ENCODE measurements at regions of chr21 and their contacts with region 1.

Region 1: GRCh38 chr21:36141513-36141925 is 6.6 kb downstream of the CBR3 start:
- DNase-seq: peak; percentile 76
- H3K4me3 Mint-ChIP-seq: no peak overlapping the region
- H3K27ac Mint-ChIP-seq: no peak overlapping the region
- H3K4me1 Mint-ChIP-seq: peaks cover 15% of the 10 kb centered on the region
- H3K27me3 Mint-ChIP-seq: no peaks in the 10 kb centered on the region

Region 2: DNA sequence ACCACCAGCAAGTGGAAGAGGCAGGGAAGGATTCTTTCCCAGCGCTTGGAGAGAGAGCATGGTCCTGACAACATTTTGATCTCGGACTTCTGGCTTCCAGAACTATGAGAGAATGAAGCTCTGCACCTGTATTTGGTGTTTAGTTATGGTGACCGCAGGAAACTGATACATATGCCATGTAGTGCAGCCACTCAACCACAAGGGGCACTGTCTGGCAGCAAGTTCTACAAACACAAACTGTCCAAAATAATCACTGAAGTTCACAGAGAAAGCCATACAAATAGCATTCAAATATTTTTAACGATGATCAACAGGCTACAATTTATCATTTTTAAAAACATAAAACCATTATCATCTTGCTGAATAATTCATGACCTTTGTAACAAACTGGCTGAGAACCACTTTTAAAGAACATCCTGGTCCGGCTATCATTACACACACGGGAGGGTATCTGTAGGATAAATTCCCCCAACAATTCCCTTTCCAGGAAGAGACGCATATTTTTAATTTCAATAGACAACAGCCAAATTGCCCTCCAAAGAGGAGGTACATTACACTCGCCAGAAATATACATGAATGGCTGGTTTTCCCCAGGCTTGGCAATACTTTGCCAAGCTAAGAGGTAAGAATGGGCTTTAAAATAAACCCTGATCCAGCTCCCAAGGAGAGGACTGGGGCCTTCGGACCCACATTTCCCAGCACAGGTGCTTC is 15.9 kb before region 1 on chr21:
- intact Hi-C with region 1: loop called (anchors 1 kb)
- DNase-seq: peak; percentile 19
- H3K4me3 Mint-ChIP-seq: no peak overlapping the region
- H3K27ac Mint-ChIP-seq: no peak overlapping the region
- H3K4me1 Mint-ChIP-seq: peaks cover 20% of the 10 kb centered on the region
- H3K27me3 Mint-ChIP-seq: peaks cover 8% of the 10 kb centered on the region

Region 3: DNA sequence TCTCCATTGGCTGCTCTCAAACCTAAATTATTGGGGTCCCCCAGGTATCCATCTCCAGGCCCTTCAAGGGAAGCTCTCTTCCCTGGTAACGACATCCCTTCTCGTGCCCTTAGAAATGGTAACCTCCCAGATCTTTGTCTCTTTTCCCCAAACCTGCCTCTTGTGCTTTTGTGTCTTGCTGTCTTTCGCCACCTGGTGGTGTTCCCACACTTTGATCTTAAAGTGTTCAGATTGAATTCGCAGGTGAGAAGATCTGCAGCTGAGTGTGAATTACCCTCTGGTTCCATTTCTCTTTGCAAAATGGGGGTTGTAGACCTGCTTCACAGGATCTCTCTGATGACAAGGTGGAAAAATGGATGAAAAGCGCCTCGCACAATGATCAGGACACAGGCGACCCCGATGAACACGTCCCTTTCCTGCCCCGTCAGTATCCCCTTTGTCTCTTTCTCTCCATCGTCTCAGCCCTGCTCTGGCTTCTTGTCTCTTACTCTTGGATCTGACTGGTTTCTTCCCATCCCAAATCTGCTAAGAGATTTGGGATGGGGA is 68.2 kb after region 1 on chr21:
- intact Hi-C with region 1: loop called (anchors 1 kb)
- DNase-seq: peak; percentile 38
- H3K4me3 Mint-ChIP-seq: no peak overlapping the region
- H3K27ac Mint-ChIP-seq: no peak overlapping the region
- H3K4me1 Mint-ChIP-seq: peaks cover 19% of the 10 kb centered on the region
- H3K27me3 Mint-ChIP-seq: peaks cover 2% of the 10 kb centered on the region

Region 4: GRCh38 chr21:36330904-36331303 is 189.4 kb after region 1 on chr21:
- intact Hi-C with region 1: loop called (anchors 1 kb)
- DNase-seq: no peak
- H3K4me3 Mint-ChIP-seq: no peak overlapping the region
- H3K27ac Mint-ChIP-seq: no peak overlapping the region
- H3K4me1 Mint-ChIP-seq: peaks cover 13% of the 10 kb centered on the region
- H3K27me3 Mint-ChIP-seq: no peaks in the 10 kb centered on the region

Region 5: GRCh38 chr21:37675202-37675801 is 1533.8 kb after region 1 on chr21:
- intact Hi-C with region 1: no loop called
- DNase-seq: peak; percentile 37
- H3K4me3 Mint-ChIP-seq: no peak overlapping the region
- H3K27ac Mint-ChIP-seq: no peak overlapping the region
- H3K4me1 Mint-ChIP-seq: no peaks in the 10 kb centered on the region
- H3K27me3 Mint-ChIP-seq: peaks cover 4% of the 10 kb centered on the region